A549 (cell line): ENCODE measurements at regions of chr10 and their contacts with region 1.

Region 1: GRCh38 chr10:101441541-101442455 is 87.8 kb downstream of the BTRC start:
- DNase-seq: peak; percentile 62 to 83
- ATAC-seq: peak; percentile 98 to 99
- H3K4me3 ChIP-seq: no peak overlapping the region
- H3K27ac ChIP-seq: no peak overlapping the region
- H3K4me1 ChIP-seq: peaks cover 5% of the 10 kb centered on the region; the same call in 1 of the 3 replicates
- CTCF ChIP-seq: peak; percentile 83
- EP300 ChIP-seq: no peak
- POLR2A ChIP-seq: no peak
- RAD21 ChIP-seq: peak; percentile 86 to 89

Region 2: DNA sequence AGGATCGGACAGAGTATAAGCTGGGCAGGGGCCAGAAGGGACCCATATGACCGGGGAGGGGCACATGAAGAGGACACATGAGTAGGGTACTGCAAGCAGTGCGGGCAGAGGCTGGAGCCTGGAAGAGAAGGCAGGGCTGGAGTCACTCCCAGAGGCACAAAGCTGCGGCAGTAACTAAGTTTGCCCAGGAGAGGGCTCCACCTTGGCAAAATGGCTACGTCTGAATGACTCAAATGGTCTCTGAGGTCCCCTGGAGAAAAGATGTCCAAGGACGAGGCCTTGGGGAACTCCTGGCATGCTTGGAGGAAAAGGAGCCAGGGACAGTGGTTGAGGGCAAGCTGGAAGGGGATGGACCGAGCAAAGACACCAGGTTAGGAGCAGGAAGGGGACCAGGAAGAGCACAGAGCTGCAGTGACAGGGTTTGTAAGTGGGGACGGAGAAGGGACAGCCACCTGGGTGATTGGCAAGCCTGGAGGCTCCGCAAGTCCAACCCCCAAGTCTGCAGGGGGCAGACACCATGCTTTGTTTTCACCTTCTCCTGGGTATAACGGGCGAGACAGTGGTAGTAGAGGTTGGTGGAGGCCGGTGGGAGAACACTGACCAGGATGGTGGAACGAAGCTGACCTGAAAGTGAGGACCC is 169.4 kb before region 1 on chr10:
- CTCF ChIA-PET with region 1: interaction called, 21 read pairs
- POLR2A ChIA-PET with region 1: no interaction called
- DNase-seq: peak; percentile 68 to 95
- ATAC-seq: peak; percentile 88 to 97
- H3K4me3 ChIP-seq: no peak overlapping the region
- H3K27ac ChIP-seq: 0 out of 6 replicates have a peak overlapping the region, but pooled peaks of 1 of the 2 experiments have one; percentile 37
- H3K4me1 ChIP-seq: peaks cover 5% of the 10 kb centered on the region; the same call in 1 of the 3 replicates
- CTCF ChIP-seq: peak; percentile 65
- EP300 ChIP-seq: no peak
- POLR2A ChIP-seq: no peak
- RAD21 ChIP-seq: peak; percentile 50 to 55; a peak in 4 of 5 replicates

Region 3: GRCh38 chr10:101297901-101298486 is 143.8 kb before region 1 on chr10:
- CTCF ChIA-PET with region 1: interaction called, 109 read pairs
- POLR2A ChIA-PET with region 1: no interaction called
- DNase-seq: peak; percentile 74 to 82
- ATAC-seq: peak; percentile 85 to 93
- H3K4me3 ChIP-seq: no peak overlapping the region
- H3K27ac ChIP-seq: no peak overlapping the region
- H3K4me1 ChIP-seq: no peaks in the 10 kb centered on the region
- CTCF ChIP-seq: peak; percentile 87
- EP300 ChIP-seq: no peak
- POLR2A ChIP-seq: no peak
- RAD21 ChIP-seq: peak in 1 of 2 experiments; percentile 32; a peak in 1 of 5 replicates

Region 4: DNA sequence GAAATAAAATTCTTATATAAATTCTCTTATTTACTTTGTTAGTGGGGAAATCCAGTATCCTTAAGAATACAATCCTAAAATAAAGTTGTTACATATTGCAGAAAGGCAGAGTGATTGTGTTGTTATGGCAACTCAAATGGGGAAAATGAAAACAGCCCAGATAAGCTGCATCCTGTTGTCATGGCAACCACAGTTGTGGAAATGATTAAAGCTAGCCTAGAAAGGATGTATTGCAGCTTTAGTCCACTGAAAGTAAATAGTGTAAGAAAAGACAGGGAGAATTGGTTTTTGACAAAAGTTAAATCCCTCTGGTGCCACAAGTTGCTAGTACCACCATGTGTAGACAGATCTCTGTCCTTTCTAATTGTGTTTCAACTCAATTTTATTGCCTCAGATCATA is 44.7 kb before region 1 on chr10:
- CTCF ChIA-PET with region 1: no interaction called
- POLR2A ChIA-PET with region 1: no interaction called
- DNase-seq: peak; percentile 26 to 62
- ATAC-seq: peak in 1 of 2 experiments; percentile 64; a peak in 4 of 6 replicates
- H3K4me3 ChIP-seq: no peak overlapping the region
- H3K27ac ChIP-seq: no peak overlapping the region
- H3K4me1 ChIP-seq: peaks cover 12% of the 10 kb centered on the region; the same call in 2 of the 3 replicates
- CTCF ChIP-seq: no peak
- EP300 ChIP-seq: no peak
- POLR2A ChIP-seq: no peak
- RAD21 ChIP-seq: no peak

Region 5: DNA sequence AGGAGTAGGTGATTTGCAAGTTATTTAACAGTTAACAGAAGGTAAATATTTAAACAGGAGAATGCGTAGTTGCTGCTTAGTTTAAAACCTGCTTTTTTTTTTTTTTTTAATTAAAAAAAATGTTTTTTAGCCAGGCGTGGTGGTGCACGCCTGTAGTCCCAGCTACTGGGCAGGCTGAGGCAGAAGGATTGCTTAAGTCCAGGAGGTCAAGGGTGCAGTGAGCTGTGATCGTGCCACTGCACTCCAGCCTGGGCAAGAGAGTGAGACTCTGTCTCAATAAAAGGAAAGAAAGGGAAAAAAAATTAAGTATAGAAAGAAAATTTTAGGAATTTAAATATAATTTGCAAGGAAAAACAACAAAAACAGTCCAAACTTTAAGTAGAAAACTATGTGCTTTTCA is 16.3 kb before region 1 on chr10:
- CTCF ChIA-PET with region 1: interaction called, 12 read pairs
- POLR2A ChIA-PET with region 1: no interaction called
- DNase-seq: no peak
- ATAC-seq: no peak
- H3K4me3 ChIP-seq: no peak overlapping the region
- H3K27ac ChIP-seq: no peak overlapping the region
- H3K4me1 ChIP-seq: no peaks in the 10 kb centered on the region
- CTCF ChIP-seq: no peak
- EP300 ChIP-seq: no peak
- POLR2A ChIP-seq: no peak
- RAD21 ChIP-seq: no peak

Region 6: GRCh38 chr10:101467286-101467770 is 25.5 kb after region 1 on chr10:
- CTCF ChIA-PET with region 1: interaction called, 11 read pairs
- POLR2A ChIA-PET with region 1: no interaction called
- DNase-seq: peak; percentile 69 to 76
- ATAC-seq: peak; percentile 87 to 89
- H3K4me3 ChIP-seq: no peak overlapping the region
- H3K27ac ChIP-seq: no peak overlapping the region
- H3K4me1 ChIP-seq: no peaks in the 10 kb centered on the region
- CTCF ChIP-seq: peak; percentile 71
- EP300 ChIP-seq: no peak
- POLR2A ChIP-seq: no peak
- RAD21 ChIP-seq: peak; percentile 46 to 62; a peak in 4 of 5 replicates